Aorta (tissue), 5 donors: ENCODE measurements at regions of chr6 and their contacts with region 1.

Region 1: DNA sequence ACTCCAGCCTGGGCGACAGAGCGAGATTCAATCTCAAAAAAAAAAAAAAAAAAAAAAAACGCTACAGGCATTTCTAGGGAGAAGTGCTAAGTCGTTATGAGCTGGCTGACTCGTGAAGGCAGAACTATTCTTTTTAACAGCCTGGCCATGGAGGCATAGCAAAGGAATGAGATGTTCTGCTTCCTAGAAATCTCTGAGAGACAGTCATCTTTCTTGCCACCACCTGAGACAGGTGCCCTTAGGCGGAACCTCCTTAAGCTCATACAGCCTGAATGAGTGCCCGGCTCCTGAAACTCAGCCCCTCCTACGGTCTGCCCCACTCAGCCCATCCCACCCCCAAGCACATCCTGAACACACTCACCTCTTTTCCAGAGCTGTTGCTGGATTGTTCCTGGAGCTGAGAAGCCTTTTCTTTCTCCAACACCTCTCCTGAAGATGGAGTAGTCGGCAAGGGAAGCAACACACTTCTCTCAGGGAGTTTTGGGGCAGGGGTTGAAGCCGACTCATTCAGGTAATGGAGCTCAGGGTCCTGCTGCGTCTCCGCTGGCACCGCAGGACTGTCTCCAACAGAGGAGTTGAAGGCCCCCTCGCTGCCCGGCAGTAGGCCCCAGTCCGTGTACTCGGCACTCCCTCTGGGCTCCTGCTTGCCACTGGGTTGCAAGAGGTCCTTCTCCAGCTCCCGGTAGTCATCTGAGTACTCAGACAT is 50.3 kb downstream of the KIAA0319 start:
- DNase-seq: no peak
- ATAC-seq: no peak
- H3K4me3 ChIP-seq: no peak overlapping the region
- H3K27ac ChIP-seq: no peak overlapping the region
- H3K4me1 ChIP-seq: no peaks in the 10 kb centered on the region
- H3K27me3 ChIP-seq: no peaks in the 10 kb centered on the region

Region 2: DNA sequence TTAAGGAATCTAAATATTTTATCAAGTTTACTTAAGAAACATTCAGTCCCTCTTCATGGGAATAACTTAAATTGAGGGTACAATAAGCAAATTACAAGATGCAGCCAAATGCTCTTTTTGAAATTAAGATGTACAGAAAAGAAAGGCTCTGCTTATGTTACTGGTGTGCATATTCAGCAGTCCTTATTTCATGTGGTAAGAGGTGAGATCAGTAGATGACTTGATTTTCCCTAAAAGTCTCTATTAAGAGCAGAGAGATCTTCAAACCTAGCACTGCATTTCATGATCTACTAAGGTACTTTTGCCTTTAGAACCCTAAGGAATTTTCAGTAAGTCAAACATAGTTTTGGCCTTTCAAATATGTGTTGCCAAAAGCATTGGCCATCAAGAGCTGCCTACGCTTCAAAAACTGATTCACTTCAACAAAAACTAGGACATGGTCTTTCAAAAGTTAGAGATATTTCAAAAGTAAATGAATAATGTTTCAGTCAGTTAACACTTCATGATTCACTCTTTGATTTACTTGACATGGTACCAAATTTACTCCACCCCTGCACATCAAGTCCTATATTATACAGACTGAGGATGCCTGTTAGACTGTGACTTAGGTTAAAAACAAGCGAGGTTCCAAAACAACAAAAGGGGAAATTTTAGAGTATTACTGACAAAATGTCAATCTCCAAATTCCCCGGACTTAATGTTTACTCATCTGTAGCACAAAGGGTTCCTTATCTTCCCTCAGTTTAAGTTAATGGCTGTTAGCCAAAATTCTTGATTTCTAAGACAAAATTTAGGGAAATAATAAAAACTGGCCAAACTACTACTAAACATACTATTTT is 104.1 kb after region 1 on chr6:
- intact Hi-C with region 1: loop called in 1 of 2 experiments (anchors 5 kb)
- DNase-seq: no peak
- ATAC-seq: no peak
- H3K4me3 ChIP-seq: no peak overlapping the region
- H3K27ac ChIP-seq: no peak overlapping the region
- H3K4me1 ChIP-seq: no peaks in the 10 kb centered on the region
- H3K27me3 ChIP-seq: no peaks in the 10 kb centered on the region

Region 3: GRCh38 chr6:24720604-24721460 is 125.2 kb after region 1 on chr6:
- intact Hi-C with region 1: no loop called
- DNase-seq: peak; percentile 100
- ATAC-seq: peak; percentile 97
- H3K4me3 ChIP-seq: peak overlapping the region; percentile 85 to 92
- H3K27ac ChIP-seq: peak overlapping the region; percentile 93 to 96
- H3K4me1 ChIP-seq: no peaks in the 10 kb centered on the region
- H3K27me3 ChIP-seq: peaks cover 0 to 1% of the 10 kb centered on the region in 2 donors

Region 4: GRCh38 chr6:24774696-24775519 is 179.2 kb after region 1 on chr6 and contains the start of gene GMNN:
- intact Hi-C with region 1: no loop called
- DNase-seq: peak; percentile 100
- ATAC-seq: peak; percentile 99
- H3K4me3 ChIP-seq: peak within 1 kb of the TSS; percentile 67 to 82
- H3K27ac ChIP-seq: peak within 1 kb of the TSS; percentile 34 to 86
- H3K4me1 ChIP-seq: no peaks in the 10 kb centered on the region
- H3K27me3 ChIP-seq: no peaks in the 10 kb centered on the region
- total RNA-seq, gene GMNN: 5.3 to 10.2 TPM